ENCODE measurements at regions of chr5 and their contacts with region 1.

Region 1: GRCh38 chr5:52915176-52915875 is 73.8 kb upstream of the ITGA2 start:
- DNase-seq: peak; percentile 66
- H3K4me3 ChIP-seq: peak overlapping the region; percentile 25 to 52 (median 39)
- H3K27ac ChIP-seq: no peak overlapping the region
- H3K4me1 ChIP-seq: no peaks in the 10 kb centered on the region
- H3K27me3 ChIP-seq: no peaks in the 10 kb centered on the region
- CTCF ChIP-seq: peak; percentile 43 to 64

Region 2: GRCh38 chr5:52693280-52693679 is 222.0 kb before region 1 on chr5:
- CTCF ChIA-PET with region 1: interaction called, 9 read pairs
- dilution Hi-C with region 1: no loop called
- in situ Hi-C with region 1: loop called in 1 of 2 experiments (anchors 25 kb)
- intact Hi-C with region 1: loop called (anchors 1 kb)
- DNase-seq: peak; percentile 40
- H3K4me3 ChIP-seq: no peak overlapping the region
- H3K27ac ChIP-seq: no peak overlapping the region
- H3K4me1 ChIP-seq: no peaks in the 10 kb centered on the region
- H3K27me3 ChIP-seq: peaks cover 6% of the 10 kb centered on the region
- CTCF ChIP-seq: peak; percentile 60 to 80

Region 3: DNA sequence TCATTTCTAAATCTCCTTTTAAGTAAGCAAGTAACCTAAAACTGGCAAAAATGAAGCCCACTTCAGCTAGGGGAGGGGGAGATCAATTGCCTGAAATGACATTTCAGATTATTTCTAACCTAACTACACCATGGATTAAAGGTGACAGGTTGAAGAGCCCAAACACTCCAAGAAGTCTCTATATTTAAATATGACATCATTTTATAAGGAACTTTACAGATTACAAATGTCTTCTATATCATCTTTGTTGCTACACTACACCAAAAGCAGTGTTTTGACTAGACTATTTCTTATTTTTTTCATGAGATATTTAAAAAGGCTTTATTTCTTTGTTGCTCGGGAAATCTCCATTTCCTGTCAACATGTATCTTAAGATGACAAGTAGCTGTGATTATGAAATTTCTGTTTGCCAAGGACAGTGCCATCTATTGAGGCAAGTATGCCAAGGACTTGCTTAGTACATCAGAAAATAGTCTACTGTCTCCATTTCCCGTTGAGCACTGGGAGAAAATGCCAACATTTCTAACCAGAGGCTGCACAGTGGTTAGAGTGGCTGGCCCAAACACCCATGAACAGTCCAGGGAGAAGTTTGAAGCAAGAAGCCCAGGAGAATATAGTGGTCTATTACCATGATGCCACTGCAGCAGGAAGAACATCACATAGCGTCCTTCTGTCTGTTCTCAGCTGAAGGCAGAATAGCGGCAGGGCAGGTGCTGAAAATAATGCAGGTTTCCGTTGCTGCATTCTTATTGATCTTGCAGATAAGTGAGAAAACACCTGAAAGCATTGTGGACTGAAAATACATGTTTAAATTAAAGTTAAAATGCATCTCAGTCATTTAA is 19.5 kb before region 1 on chr5:
- CTCF ChIA-PET with region 1: no interaction called
- dilution Hi-C with region 1: no loop called
- in situ Hi-C with region 1: no loop called
- intact Hi-C with region 1: no loop called
- DNase-seq: no peak
- H3K4me3 ChIP-seq: no peak overlapping the region
- H3K27ac ChIP-seq: no peak overlapping the region
- H3K4me1 ChIP-seq: no peaks in the 10 kb centered on the region
- H3K27me3 ChIP-seq: no peaks in the 10 kb centered on the region
- CTCF ChIP-seq: no peak